B cell (primary cell): ENCODE measurements at regions of chr1 and their contacts with region 1.

Region 1: DNA sequence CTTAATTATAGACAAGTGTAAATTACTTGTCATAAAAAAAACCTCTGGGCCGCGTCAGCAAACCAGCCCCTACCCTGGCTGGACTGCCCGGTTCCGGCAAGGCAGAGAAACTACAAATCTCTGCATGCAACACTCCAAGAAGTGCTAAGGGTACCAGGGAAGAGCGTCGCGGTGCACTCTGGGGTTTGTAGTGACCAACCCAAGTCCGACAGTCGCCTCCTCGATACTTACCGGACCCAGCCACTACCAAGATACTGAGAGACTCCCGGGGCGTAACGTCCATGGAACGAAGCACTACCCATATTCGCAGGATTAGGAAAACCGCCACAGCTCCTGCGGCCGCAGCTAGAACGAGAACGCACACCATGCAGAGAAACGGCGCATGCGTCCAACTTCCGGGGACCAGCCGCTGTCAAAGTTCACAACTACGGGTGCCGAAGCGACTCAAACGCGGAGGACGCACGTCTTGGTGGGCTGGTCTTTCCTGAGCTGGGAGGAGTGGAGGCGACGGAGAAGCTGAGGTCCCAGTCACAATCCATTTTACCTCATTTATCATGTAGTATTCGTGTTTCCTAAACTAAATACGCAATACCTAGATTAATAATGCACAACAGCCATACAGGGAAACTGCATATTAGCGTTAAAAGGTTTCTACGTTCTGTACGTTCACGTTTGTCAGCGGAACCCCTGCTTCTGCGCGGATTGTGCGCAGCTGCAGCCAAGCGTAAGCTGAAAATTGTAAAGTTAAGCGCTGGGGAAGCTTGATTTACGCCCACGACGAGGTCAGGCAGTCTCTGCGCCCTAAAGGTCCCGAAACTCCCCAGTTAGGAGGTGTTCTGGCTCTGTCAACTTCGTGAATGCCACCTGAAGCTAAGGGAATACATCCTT is at the start of gene ALG14:
- DNase-seq: peak; percentile 98
- ATAC-seq: peak; percentile 95
- H3K4me3 ChIP-seq: peak within 1 kb of the TSS; percentile 78 to 92 (median 86)
- H3K4me3 Mint-ChIP-seq: peak within 1 kb of the TSS; percentile 98
- H3K27ac ChIP-seq: peak within 1 kb of the TSS; percentile 66 to 70
- H3K27ac Mint-ChIP-seq: peak within 1 kb of the TSS; percentile 99
- H3K4me1 ChIP-seq: peaks cover 11 to 14% of the 10 kb centered on the region in 2 donors
- H3K4me1 Mint-ChIP-seq: peaks cover 20% of the 10 kb centered on the region
- H3K27me3 ChIP-seq: peaks cover 0 to 2% (median 0%) of the 10 kb centered on the region in 4 experiments
- H3K27me3 Mint-ChIP-seq: no peaks in the 10 kb centered on the region
- CTCF ChIP-seq: no peak
- total RNA-seq, gene ALG14: 2.6 and 3.3 TPM in 2 replicates

Region 2: GRCh38 chr1:94417978-94418663 is 654.7 kb before region 1 on chr1 and contains the start of gene ABCD3:
- CTCF ChIA-PET with region 1: no interaction called
- POLR2A ChIA-PET with region 1: no interaction called
- intact Hi-C with region 1: loop called (anchors 1 kb)
- DNase-seq: peak; percentile 98
- ATAC-seq: peak; percentile 95
- H3K4me3 ChIP-seq: peak within 1 kb of the TSS; percentile 67 to 89 (median 85)
- H3K4me3 Mint-ChIP-seq: no peak within 1 kb of the TSS
- H3K27ac ChIP-seq: peak within 1 kb of the TSS; percentile 73 to 80
- H3K27ac Mint-ChIP-seq: peak within 1 kb of the TSS; percentile 77
- H3K4me1 ChIP-seq: peaks cover 12 to 15% of the 10 kb centered on the region in 2 donors
- H3K4me1 Mint-ChIP-seq: peaks cover 22% of the 10 kb centered on the region
- H3K27me3 ChIP-seq: peaks cover 0 to 5% (median 2%) of the 10 kb centered on the region in 4 experiments
- H3K27me3 Mint-ChIP-seq: peaks cover 7% of the 10 kb centered on the region
- CTCF ChIP-seq: no peak
- total RNA-seq, gene ABCD3: 19.4 and 21.0 TPM in 2 replicates

Region 3: DNA sequence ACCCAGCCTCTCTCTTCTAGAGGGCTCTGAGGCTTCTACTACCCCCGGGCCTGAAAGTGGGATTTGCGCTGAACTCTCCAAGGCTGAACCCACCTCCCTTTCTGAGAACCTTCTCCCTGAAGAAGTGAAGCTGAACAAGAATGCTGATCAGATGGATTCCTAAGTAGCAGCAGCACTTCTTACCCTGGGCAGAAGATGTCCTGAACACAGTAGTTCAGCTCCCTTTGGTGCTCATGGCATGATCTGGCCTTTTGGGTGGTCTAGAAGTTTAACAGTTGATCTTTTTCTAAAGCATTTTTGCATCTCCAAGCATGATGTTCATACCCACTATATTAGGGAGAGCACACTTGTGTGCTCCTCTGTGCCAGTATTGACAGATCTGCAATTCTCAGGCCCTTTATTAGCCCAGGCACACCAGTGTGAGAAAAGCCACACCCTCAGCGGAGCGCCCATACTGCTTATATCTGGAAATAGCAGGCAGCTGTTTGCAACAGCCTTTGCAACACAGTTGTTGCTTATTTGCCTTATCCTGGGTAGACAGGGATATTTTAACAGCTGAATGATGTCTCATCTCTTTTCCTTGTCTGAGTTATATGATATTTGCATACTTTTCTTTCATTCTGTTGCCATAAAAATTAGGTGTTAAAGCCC is 180.0 kb before region 1 on chr1:
- CTCF ChIA-PET with region 1: no interaction called
- POLR2A ChIA-PET with region 1: no interaction called
- intact Hi-C with region 1: no loop called
- DNase-seq: no peak
- ATAC-seq: no peak
- H3K4me3 ChIP-seq: no peak overlapping the region
- H3K4me3 Mint-ChIP-seq: no peak overlapping the region
- H3K27ac ChIP-seq: no peak overlapping the region
- H3K27ac Mint-ChIP-seq: no peak overlapping the region
- H3K4me1 ChIP-seq: no peaks in the 10 kb centered on the region
- H3K4me1 Mint-ChIP-seq: no peaks in the 10 kb centered on the region
- H3K27me3 ChIP-seq: no peaks in the 10 kb centered on the region
- H3K27me3 Mint-ChIP-seq: peaks cover 8% of the 10 kb centered on the region
- CTCF ChIP-seq: no peak

Region 4: DNA sequence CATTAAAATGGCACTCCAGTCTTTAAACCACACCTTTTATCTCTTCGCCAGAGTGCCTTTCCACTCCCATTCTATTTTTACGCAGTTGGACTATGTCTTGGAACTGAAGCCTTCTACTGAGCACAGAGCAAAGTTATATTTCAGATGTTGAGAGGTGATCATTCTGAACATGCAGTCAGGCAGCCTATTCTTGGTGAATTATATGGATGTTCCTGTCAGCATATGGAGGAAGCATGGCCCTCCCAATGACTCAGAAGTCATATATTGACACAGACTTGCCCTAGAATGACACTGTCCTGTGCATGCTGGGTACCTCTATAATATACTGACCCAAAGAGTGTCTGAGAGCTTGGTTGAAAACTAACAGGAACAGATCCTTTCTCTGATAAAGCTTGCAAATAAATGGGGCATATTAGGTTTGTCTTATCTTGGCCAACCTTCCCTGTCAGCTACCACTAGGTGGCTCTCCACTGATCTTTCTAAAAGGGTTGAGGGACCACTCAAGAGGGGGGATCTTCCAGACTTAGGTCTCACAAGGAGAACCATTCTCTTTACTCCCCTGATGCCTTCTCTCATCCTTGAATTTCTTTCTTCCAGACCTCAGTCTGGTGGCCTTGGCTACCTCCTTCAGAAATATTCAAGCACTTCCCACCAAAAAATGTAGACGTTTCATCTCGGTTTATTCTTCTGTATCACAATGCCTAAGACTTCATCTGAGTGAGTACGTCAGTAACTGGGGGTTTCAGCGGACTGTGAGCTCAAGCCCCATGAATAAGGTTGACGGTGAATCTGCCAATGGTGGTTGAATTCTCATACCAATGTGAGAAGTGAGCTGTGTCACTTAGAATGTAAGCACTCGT is 11.8 kb after region 1 on chr1:
- CTCF ChIA-PET with region 1: interaction called, 26 read pairs
- POLR2A ChIA-PET with region 1: interaction called, 5 read pairs
- intact Hi-C with region 1: no loop called
- DNase-seq: peak; percentile 67
- ATAC-seq: peak; percentile 78
- H3K4me3 ChIP-seq: no peak overlapping the region
- H3K4me3 Mint-ChIP-seq: no peak overlapping the region
- H3K27ac ChIP-seq: no peak overlapping the region
- H3K27ac Mint-ChIP-seq: no peak overlapping the region
- H3K4me1 ChIP-seq: no peaks in the 10 kb centered on the region
- H3K4me1 Mint-ChIP-seq: no peaks in the 10 kb centered on the region
- H3K27me3 ChIP-seq: peaks cover 0 to 4% (median 0%) of the 10 kb centered on the region in 4 experiments
- H3K27me3 Mint-ChIP-seq: peaks cover 10% of the 10 kb centered on the region
- CTCF ChIP-seq: peak; percentile 81

Region 5: DNA sequence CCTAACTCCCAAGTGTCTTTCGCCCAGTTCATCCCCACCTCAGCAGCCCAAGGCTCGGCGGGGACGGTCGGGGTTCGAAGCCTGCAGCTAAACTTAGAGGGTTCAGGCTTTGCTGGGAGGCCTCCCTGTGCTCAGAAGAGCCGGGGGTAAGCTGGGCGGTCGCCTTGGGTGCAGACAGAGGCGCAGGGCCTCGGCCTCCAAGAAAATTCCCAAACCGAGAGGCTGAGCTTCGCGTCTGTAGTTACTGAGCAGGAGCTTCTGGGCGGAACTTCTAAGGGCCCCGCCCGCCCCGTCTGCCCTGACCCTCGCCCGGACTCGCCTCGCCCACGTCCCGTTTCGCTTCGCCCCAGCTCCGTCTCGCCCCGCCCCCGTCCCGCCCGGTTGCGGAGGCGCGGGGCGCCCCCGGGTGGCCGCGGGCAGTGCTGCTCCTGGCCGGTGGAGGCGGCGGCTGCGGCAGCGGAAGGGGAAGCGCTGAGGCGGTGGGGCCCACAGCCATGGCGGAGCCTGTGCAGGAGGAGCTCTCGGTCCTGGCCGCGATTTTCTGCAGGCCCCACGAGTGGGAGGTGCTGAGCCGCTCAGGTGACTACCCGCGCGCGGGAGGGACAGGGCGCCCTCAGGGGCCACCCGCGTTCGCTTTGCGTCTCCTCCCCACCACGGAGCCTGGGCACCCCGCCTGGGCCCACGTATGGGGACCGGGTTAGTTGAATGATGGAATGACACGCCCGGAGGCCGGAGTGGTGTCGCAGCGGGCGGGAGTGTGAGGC is 161.1 kb after region 1 on chr1 and contains the start of gene RWDD3:
- CTCF ChIA-PET with region 1: interaction called, 36 read pairs
- POLR2A ChIA-PET with region 1: interaction called, 8 read pairs
- intact Hi-C with region 1: loop called (anchors 1 kb)
- DNase-seq: peak; percentile 95
- ATAC-seq: peak; percentile 96
- H3K4me3 ChIP-seq: peak within 1 kb of the TSS; percentile 55 to 86 (median 78)
- H3K4me3 Mint-ChIP-seq: peak within 1 kb of the TSS; percentile 87
- H3K27ac ChIP-seq: peak within 1 kb of the TSS; percentile 63 to 73
- H3K27ac Mint-ChIP-seq: peak within 1 kb of the TSS; percentile 89
- H3K4me1 ChIP-seq: peaks cover 10 to 11% of the 10 kb centered on the region in 2 donors
- H3K4me1 Mint-ChIP-seq: peaks cover 35% of the 10 kb centered on the region
- H3K27me3 ChIP-seq: peaks cover 0 to 10% (median 4%) of the 10 kb centered on the region in 4 experiments
- H3K27me3 Mint-ChIP-seq: peaks cover 10% of the 10 kb centered on the region
- CTCF ChIP-seq: peak; percentile 82
- total RNA-seq, gene RWDD3: 21.9 and 28.1 TPM in 2 replicates